ENCODE measurements at regions of chr3 and their contacts with region 1.

Region 1: DNA sequence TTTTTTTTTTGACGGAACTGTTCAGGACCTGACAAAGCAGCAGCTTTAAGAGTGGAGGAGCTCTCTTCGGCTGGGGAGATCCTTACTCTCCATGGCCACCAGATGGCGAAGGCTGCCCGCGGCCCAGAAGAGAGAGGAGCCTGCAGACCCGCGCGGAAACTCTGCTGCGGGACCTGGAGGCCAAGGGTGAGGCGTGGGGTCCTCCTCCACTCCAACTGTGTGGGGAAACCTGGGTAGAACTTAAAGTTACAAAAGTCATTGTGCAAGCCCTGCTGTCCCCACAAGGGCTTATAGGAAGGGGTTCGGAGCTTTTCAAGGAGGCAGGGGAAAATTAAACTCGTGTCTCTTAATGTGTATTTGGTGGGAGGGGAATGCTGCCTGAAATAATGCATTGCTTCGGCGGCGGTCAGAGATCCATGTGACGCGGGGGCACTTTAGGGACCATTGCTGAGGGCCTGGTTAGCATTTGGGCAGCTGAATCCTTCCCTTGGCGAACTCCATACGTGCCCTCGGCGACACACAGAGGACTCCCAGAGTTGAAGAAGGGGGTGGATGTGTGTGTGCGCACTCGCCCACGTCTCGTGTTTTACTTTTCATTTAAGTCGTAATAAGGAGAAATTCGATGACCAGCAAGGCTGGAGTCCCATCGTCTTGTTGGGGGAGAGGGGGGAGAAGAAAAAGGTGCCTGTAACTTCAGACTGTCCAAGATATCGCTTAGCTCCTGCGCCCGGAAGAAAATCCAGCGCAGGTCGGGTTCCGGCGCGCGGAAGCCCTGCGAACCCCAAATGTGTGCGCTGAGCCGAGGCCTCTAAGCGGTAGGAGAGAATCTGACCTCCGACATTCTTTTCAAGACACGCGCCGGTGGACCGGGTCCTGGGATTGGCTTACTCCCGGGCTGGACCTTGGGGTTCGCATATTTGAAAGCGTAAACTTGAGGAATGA is 9.7 kb downstream of the EOMES start:
- DNase-seq: peak; percentile 28
- H3K4me3 ChIP-seq: peak overlapping the region; percentile 58
- CTCF ChIP-seq: peak; percentile 91

Region 2: GRCh38 chr3:27467545-27467944 is 244.9 kb before region 1 on chr3:
- CTCF ChIA-PET with region 1: interaction called, 12 read pairs
- POLR2A ChIA-PET with region 1: no interaction called
- DNase-seq: no peak
- H3K4me3 ChIP-seq: no peak overlapping the region
- CTCF ChIP-seq: peak; percentile 36

Region 3: GRCh38 chr3:27596334-27596841 is 116.0 kb before region 1 on chr3:
- CTCF ChIA-PET with region 1: no interaction called
- POLR2A ChIA-PET with region 1: no interaction called
- DNase-seq: no peak
- H3K4me3 ChIP-seq: no peak overlapping the region
- CTCF ChIP-seq: no peak

Region 4: GRCh38 chr3:27686642-27687041 is 25.8 kb before region 1 on chr3:
- CTCF ChIA-PET with region 1: interaction called, 17 read pairs
- POLR2A ChIA-PET with region 1: no interaction called
- DNase-seq: peak; percentile 69
- H3K4me3 ChIP-seq: no peak overlapping the region
- CTCF ChIP-seq: no peak

Region 5: GRCh38 chr3:27728195-27729087 is 16.0 kb after region 1 on chr3:
- CTCF ChIA-PET with region 1: interaction called, 25 read pairs
- POLR2A ChIA-PET with region 1: no interaction called
- DNase-seq: no peak
- H3K4me3 ChIP-seq: no peak overlapping the region
- CTCF ChIP-seq: peak; percentile 3

Region 6: GRCh38 chr3:27767000-27767399 is 54.6 kb after region 1 on chr3:
- CTCF ChIA-PET with region 1: no interaction called
- POLR2A ChIA-PET with region 1: no interaction called
- DNase-seq: no peak
- H3K4me3 ChIP-seq: no peak overlapping the region
- CTCF ChIP-seq: no peak

Region 7: DNA sequence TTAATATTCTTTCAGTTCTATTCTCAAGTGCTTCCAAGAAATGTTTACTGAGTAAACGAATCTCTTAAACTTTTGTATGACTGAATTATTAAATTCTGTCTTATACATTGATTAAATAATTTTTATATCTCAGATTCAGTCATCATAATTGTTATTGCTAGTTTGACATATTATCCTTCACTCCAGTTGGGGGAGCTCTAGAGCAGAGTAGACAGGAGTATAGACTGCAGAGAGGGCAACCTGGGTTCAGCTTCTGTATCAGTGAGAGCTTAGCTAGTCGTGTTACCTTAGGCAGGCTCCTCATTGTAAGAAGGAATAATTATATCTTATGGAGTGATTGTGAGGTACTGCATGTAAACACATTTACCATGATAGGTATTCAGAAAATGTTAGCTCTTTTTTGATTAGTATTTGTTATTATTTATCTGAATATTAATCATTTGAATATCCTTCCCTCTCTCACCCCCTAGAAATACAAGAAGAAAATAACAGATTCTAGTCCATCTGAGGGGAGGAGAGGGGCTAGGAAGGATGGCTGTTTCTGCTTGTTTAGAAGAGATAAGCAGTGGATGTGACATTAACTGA is 605.1 kb after region 1 on chr3:
- CTCF ChIA-PET with region 1: interaction called, 23 read pairs
- POLR2A ChIA-PET with region 1: no interaction called
- DNase-seq: no peak
- H3K4me3 ChIP-seq: no peak overlapping the region
- CTCF ChIP-seq: peak; percentile 52

Region 8: GRCh38 chr3:28334552-28334951 is 622.1 kb after region 1 on chr3:
- CTCF ChIA-PET with region 1: interaction called, 91 read pairs
- POLR2A ChIA-PET with region 1: no interaction called
- DNase-seq: no peak
- H3K4me3 ChIP-seq: no peak overlapping the region
- CTCF ChIP-seq: no peak